ENCODE measurements at regions of chr1 and their contacts with region 1.

Region 1: DNA sequence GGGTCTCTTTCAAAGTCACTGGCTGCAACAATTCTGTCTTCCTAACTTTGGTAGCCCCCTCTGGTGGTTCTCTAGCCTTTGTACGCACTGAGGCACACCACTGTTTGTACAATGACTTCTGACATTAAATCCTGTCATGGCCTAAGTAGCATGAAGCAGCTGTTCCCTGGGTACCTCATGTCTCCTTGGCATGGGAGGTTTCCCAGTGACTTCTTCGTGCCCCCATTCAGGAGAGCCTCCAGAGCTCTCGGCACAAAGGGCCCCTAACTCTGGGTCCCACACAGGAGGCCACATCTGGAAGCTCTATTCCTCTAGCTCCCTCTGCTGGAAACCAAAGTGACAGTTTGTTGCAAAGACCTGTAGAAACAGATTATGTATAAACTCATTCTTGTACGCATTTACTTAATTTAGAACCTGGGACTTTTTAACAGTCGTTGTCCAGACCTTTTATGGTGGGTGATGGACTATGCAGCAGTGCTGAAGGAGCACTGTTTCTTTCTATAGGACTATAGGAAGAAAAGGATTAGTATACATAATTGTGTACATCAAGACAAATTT is 13.4 kb downstream of the SWT1 start:
- DNase-seq: peak in 7 of 9 experiments; percentile 23 to 76 (median 53)
- ATAC-seq: peak; percentile 93
- H3K4me3 ChIP-seq: no peak overlapping the region
- H3K4me3 Mint-ChIP-seq: peak overlapping the region; percentile 42
- H3K27ac ChIP-seq: no peak overlapping the region
- H3K27ac Mint-ChIP-seq: peak overlapping the region; percentile 10
- H3K4me1 ChIP-seq: no peaks in the 10 kb centered on the region
- H3K4me1 Mint-ChIP-seq: peaks cover 3% of the 10 kb centered on the region
- H3K27me3 ChIP-seq: no peaks in the 10 kb centered on the region
- H3K27me3 Mint-ChIP-seq: no peaks in the 10 kb centered on the region
- CTCF ChIP-seq: peak; percentile 80

Region 2: DNA sequence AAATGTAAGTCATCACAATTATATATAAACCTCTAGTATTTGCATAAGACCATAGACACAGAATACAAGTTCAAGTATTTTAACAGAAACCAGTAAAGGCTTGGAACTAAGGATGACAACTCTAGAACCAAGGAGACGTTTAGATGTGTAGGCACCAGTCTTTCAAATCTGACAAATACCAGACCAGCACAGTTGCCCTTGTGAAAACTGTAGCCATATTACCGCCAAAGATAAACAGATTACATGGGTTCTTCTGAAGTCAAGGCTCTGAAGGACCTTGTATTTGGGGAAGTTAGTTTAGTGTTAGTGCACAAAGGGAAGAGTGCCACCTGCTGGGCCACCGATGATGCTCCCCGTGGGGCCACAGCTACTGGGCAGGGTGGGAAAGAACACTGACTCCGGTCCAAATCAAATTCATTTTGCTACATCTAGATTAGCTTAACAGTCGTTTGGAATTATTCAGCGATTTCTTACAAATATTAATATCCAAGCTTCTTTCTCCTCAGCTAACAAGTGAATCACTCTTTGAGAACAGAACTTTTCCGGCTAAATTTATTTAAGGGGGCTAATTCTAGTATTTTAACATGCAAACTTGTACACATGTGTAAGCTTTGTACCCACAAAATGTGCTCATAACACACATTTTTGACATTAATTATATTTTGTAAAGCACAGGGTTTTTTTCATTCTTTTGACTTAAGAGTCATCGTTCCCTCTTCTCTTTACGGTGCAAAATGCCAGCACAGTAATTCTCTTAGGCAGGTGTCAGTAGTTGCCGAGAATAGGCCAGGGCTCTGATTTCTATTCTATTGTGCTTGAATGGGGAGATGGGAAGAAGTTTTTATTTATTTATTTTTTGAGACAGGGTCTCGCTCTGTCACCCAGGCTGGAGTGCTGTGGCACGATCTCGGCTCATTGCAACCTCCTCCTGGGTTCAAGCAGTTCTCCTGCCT is 188.1 kb before region 1 on chr1:
- CTCF ChIA-PET with region 1: interaction called, 10 read pairs
- POLR2A ChIA-PET with region 1: no interaction called
- intact Hi-C with region 1: loop called (anchors 2 to 5 kb)
- DNase-seq: peak; percentile 57 to 86 (median 78)
- ATAC-seq: peak; percentile 97
- H3K4me3 ChIP-seq: no peak overlapping the region
- H3K4me3 Mint-ChIP-seq: no peak overlapping the region
- H3K27ac ChIP-seq: no peak overlapping the region
- H3K27ac Mint-ChIP-seq: no peak overlapping the region
- H3K4me1 ChIP-seq: no peaks in the 10 kb centered on the region
- H3K4me1 Mint-ChIP-seq: peaks cover 5% of the 10 kb centered on the region
- H3K27me3 ChIP-seq: no peaks in the 10 kb centered on the region
- H3K27me3 Mint-ChIP-seq: peaks cover 20% of the 10 kb centered on the region
- CTCF ChIP-seq: peak; percentile 87

Region 3: DNA sequence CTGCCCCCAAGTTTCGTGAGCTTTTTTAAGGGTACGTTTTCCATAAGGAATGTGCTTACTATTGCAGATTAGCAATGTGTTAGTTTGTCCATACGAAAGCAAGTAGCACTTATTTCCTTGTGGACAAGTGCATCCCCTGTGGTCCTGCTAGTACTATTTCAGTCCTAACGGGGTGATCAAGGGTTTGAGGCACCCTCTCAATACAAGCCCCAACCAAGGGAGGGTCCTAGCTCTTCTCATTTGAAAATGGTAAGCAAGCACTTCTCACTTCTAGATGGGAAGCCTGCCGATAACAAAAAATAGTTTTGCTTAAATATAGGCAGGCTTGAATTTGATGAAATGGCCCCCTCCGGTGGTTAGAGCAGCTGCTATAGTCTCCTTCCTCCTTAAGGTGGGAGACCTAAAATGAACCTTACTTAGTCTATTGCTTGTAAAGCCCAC is 499.8 kb after region 1 on chr1:
- CTCF ChIA-PET with region 1: interaction called, 14 read pairs
- POLR2A ChIA-PET with region 1: no interaction called
- intact Hi-C with region 1: loop called in 1 of 2 experiments (anchors 5 kb)
- DNase-seq: peak; percentile 12 to 78 (median 63)
- ATAC-seq: peak; percentile 81
- H3K4me3 ChIP-seq: no peak overlapping the region
- H3K4me3 Mint-ChIP-seq: no peak overlapping the region
- H3K27ac ChIP-seq: no peak overlapping the region
- H3K27ac Mint-ChIP-seq: peak overlapping the region; percentile 78
- H3K4me1 ChIP-seq: peaks cover 14% of the 10 kb centered on the region
- H3K4me1 Mint-ChIP-seq: peaks cover 39% of the 10 kb centered on the region
- H3K27me3 ChIP-seq: no peaks in the 10 kb centered on the region
- H3K27me3 Mint-ChIP-seq: no peaks in the 10 kb centered on the region
- CTCF ChIP-seq: peak; percentile 69

Region 4: DNA sequence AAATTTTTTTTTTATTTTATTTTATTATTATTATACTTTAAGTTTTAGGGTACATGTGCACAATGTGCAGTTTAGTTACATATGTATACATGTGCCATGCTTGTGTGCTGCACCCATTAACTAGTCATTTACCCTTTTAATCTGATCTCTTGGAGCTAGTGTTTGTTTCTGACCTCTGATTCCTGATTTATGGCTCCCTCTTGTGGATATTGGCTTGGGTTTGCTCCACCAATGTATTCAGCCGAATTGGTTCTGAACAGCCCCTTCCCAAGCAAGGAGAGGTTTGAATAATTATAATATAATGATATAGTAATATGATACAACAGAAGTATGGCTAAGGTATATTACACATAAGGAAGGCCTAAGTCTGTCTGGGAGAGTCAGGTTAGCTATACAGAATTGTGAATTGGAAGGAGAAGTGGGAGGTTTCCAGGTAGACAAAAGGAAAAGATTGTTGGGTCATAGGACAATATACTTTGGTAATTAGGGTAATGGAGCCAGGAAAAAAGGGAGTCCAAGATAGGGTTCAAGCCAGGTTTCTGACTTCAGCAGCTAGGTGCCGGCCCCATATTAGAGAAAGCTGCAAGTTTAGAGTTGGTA is 510.8 kb after region 1 on chr1:
- CTCF ChIA-PET with region 1: interaction called, 13 read pairs
- POLR2A ChIA-PET with region 1: no interaction called
- intact Hi-C with region 1: no loop called
- DNase-seq: peak in 4 of 9 experiments; percentile 15 to 67 (median 40)
- ATAC-seq: peak; percentile 51
- H3K4me3 ChIP-seq: no peak overlapping the region
- H3K4me3 Mint-ChIP-seq: no peak overlapping the region
- H3K27ac ChIP-seq: no peak overlapping the region
- H3K27ac Mint-ChIP-seq: no peak overlapping the region
- H3K4me1 ChIP-seq: peaks cover 10% of the 10 kb centered on the region
- H3K4me1 Mint-ChIP-seq: peaks cover 26% of the 10 kb centered on the region
- H3K27me3 ChIP-seq: no peaks in the 10 kb centered on the region
- H3K27me3 Mint-ChIP-seq: no peaks in the 10 kb centered on the region
- CTCF ChIP-seq: peak; percentile 30

Measured in CD8-positive, alpha-beta T cell (primary cell).